Caco-2 (cell line): ENCODE measurements at regions of chr3 and their contacts with region 1.

Region 1: DNA sequence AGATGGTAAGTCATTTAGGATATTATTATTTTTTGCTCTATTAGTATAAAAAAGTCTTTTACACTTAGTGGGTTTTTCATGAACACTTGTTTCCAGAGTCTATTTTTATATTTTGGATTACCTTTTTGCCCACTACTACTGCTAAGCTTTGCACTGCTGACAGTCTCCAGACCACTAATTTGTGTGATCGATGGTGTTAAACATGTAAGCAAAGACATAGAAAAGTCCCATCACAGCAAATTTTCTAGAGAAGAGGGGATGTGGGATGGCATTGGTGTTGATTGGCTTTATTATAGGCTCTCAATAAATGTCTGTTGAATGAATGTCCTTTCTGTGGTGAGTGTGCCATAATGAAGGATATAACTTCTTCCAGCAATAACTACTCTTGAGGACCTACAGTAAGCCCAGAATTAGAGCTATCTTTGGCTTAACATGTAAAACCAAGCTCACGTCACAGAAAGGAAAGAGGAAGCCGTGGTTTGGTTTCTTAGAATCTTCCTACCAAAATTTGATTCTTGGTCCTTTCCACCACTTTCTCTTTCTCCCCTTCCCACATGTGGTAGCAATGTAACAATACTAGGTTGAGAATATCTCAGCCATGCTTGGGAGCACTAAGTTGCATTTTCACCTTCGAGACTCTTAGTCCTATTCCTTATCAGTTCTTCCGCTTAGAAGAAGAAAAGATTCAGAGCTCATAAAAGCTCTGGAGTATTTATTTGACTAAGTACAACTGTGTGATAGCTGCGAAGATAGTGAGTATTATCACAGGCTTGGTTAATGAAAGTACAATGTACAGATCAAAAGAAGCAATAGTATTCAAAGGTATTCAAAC is 90.6 kb upstream of the UMPS start:
- DNase-seq: peak in 1 of 2 experiments; percentile 52
- H3K4me3 ChIP-seq: no peak overlapping the region
- H3K4me3 Mint-ChIP-seq: peak overlapping the region; percentile 37
- H3K27ac Mint-ChIP-seq: peak overlapping the region; percentile 70
- H3K4me1 ChIP-seq: peaks cover 74% of the 10 kb centered on the region
- H3K4me1 Mint-ChIP-seq: peaks cover 53% of the 10 kb centered on the region
- H3K27me3 ChIP-seq: no peaks in the 10 kb centered on the region
- H3K27me3 Mint-ChIP-seq: no peaks in the 10 kb centered on the region
- CTCF ChIP-seq: no peak

Region 2: DNA sequence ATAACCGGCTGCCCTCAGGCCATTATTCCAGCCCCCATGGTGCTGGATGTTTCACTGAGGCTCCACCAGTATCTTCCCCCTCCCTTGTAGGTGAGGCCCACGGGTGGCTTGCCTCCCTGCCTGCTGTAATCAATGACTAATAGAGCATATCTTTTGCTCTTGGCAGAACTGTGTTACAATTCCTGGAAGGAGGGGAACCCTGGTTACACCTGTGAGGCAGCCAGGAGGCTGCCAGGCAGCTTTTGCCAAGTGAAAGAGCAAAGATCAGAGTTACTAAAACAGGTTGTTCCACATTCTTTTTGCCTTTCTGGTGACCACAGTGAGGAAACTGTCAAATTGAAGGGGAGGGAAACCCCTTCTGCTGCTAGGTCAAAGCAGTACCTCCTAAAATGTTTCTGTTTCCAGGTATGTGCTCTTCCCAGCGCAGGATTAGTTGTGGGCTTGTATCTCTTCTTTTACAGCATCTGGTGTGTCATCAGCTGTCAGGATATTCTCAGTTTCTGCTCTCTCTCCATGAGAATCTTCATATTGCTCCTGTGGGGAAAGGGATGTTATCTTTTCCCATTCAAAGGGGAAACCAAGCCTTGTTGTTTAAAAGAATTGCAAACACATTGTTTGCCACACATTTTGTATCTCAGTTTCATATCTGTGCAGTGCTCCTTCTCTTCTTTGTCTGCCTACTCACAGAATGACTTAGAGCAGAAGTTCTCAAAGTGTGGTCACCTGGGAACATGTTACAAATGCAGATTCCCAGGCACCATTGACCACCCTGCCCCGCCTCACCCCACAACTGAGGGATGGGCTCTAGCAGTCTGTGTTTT is 46.8 kb before region 1 on chr3:
- CTCF ChIA-PET with region 1: interaction called, 4 read pairs
- POLR2A ChIA-PET with region 1: interaction called, 20 read pairs
- intact Hi-C with region 1: loop called (anchors 1 kb)
- DNase-seq: peak; percentile 89 to 91
- H3K4me3 ChIP-seq: no peak overlapping the region
- H3K4me3 Mint-ChIP-seq: peak overlapping the region; percentile 69
- H3K27ac Mint-ChIP-seq: peak overlapping the region; percentile 95
- H3K4me1 ChIP-seq: peaks cover 70% of the 10 kb centered on the region
- H3K4me1 Mint-ChIP-seq: peaks cover 49% of the 10 kb centered on the region
- H3K27me3 ChIP-seq: no peaks in the 10 kb centered on the region
- H3K27me3 Mint-ChIP-seq: no peaks in the 10 kb centered on the region
- CTCF ChIP-seq: no peak

Region 3: GRCh38 chr3:124627501-124627908 is 12.1 kb before region 1 on chr3:
- CTCF ChIA-PET with region 1: interaction called, 13 read pairs
- POLR2A ChIA-PET with region 1: interaction called, 13 read pairs
- intact Hi-C with region 1: loop called (anchors 1 kb)
- DNase-seq: peak; percentile 81 to 89
- H3K4me3 ChIP-seq: no peak overlapping the region
- H3K4me3 Mint-ChIP-seq: peak overlapping the region; percentile 46
- H3K27ac Mint-ChIP-seq: peak overlapping the region; percentile 62
- H3K4me1 ChIP-seq: peaks cover 70% of the 10 kb centered on the region
- H3K4me1 Mint-ChIP-seq: peaks cover 60% of the 10 kb centered on the region
- H3K27me3 ChIP-seq: no peaks in the 10 kb centered on the region
- H3K27me3 Mint-ChIP-seq: no peaks in the 10 kb centered on the region
- CTCF ChIP-seq: no peak

Region 4: DNA sequence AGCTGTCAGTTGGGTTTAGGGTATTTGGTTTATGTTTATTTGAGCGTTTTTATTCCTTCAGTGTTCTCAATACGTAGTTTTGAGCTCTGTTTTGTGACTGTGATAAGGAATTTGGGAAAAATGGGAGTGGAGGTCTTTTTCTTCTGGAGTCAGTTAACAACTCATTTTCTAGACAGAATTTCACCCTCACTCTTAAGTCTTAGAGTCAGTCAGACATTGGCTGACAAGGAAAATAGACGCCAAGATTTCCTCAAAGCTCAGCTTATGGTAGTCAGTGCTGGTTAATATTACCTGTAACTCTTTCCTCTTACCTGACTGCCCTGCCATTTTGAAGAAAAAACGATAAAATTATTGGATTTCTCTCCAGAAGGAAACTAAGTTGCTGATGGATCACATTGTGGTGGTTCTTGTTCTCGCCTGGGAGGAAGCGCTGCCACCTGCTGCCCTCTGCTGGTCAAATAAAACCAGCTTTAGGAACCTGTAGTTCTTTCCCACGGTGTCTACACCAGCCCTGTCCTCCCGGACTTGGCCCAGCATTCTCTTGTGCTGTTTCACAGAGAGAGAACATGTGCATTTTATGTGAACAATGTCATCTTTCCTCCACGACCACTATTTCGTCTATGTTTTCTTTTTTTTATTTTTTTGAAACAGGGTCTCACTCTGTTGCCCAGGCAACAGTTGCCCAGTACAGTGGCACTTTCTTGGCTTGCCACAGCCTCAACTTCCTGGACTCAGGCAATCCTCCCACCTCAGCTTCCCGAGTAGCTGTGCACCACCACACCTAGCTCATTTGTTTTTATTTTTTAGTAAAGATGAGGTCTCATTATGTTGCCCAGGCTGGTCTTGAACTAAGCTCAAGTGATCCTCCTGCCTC is 49.2 kb after region 1 on chr3:
- CTCF ChIA-PET with region 1: interaction called, 9 read pairs
- POLR2A ChIA-PET with region 1: no interaction called
- intact Hi-C with region 1: loop called (anchors 2 kb)
- DNase-seq: peak; percentile 83 to 84
- H3K4me3 ChIP-seq: no peak overlapping the region
- H3K4me3 Mint-ChIP-seq: peak overlapping the region; percentile 48
- H3K27ac Mint-ChIP-seq: peak overlapping the region; percentile 71
- H3K4me1 ChIP-seq: peaks cover 44% of the 10 kb centered on the region
- H3K4me1 Mint-ChIP-seq: peaks cover 53% of the 10 kb centered on the region
- H3K27me3 ChIP-seq: no peaks in the 10 kb centered on the region
- H3K27me3 Mint-ChIP-seq: no peaks in the 10 kb centered on the region
- CTCF ChIP-seq: peak; percentile 79 to 80